ENCODE measurements at regions of chr20 and their contacts with region 1.

Region 1: DNA sequence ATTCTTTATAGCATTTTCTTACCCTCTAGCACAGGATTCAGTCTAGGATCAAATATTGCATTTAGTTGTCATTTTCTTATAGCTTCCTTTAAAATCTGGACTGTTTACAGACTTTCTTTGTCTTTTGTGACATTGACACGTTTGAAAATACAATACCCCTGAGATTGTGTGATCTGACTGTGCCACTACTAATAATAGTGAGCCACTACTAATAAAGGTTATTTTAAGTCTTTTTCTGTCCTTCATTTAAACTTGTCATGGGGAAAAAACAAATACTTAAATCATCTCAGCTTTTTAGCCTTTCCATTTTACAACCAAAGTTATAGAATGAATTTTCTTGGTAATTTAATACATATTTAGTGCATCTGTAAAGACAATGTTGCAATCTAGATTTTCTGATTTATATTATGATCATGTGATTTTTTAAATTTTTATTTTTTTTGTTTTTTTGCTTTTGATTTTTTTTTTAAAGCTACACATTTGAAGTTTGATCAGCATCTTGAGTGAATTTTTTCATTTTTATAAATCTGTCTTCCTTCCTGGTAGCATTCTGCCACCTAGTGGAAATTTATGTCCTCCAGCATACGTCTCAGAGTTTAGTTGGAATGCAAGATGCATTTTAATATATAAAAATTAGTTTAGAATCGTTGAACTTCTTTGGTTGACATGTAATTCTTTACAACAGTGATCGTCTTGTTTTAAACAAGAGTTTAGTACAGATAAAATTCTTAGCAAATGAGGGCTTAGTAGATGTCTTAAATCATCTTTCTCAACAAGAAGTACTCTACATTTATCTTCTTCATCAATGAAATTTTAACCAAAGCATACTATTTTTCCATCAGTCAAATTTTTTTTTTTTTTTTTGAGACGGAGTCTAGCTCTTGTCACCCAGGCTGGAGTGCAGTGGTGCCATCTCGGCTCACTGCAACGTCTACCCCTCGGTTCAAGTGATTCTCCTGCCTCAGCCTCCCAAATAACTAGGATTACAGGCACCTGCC is 119.4 kb downstream of the NCOA3 start:
- DNase-seq: peak; percentile 82
- ATAC-seq: peak; percentile 68
- H3K4me3 ChIP-seq: no peak overlapping the region
- H3K27ac ChIP-seq: no peak overlapping the region
- H3K4me1 ChIP-seq: no peaks in the 10 kb centered on the region
- H3K27me3 ChIP-seq: no peaks in the 10 kb centered on the region
- CTCF ChIP-seq: peak; percentile 92
- POLR2A ChIP-seq: 0 out of 2 replicates have a peak, but pooled peaks have one; percentile 34
- RAD21 ChIP-seq: peak; percentile 91

Region 2: DNA sequence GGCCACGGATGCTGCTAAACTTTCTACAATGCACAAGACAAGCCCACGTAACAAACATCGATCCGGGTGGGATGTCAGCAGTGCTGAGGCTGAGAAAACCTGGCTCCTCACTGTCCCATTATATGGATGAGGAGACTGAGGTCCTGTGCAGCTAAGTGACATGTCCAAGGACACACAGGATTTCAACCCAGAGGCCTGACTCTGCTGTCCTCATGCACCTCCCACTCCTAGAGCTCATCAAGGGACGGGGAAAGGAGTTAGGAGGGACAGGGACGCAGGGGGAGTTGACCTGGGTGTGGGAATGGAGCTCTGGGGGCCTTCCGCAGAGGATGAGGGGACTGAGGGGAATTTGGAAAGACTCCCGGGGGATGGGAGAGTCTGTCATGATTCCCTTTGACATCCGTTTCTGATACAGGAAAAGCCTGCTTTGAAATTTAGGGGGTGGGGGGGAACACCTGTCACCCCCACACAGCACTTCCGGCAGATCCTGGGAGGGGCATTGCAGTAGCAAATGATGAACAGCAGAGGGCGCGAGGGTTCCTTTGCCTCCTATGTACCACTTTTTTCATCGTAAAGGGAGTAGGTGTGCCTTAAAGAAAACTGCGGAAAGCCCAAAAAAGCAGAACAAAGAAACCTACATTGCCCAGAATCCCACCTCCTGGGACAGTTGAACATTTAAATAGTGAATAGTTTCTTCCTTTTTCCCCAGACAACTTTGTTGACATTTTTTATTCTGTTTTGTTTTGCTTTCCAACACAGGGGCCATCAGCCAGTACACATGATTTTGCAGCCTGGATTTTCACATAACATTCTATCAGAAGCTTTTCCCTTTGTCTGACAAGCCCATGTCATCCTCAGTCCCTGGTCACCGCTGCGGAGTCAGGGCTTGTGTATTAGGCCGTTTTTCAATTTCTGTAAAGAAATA is 863.1 kb before region 1 on chr20:
- CTCF ChIA-PET with region 1: no interaction called
- POLR2A ChIA-PET with region 1: no interaction called
- dilution Hi-C with region 1: no loop called
- in situ Hi-C with region 1: loop called (anchors 10 kb)
- intact Hi-C with region 1: no loop called
- DNase-seq: peak; percentile 60
- ATAC-seq: peak; percentile 89
- H3K4me3 ChIP-seq: no peak overlapping the region
- H3K27ac ChIP-seq: no peak overlapping the region
- H3K4me1 ChIP-seq: peaks cover 4% of the 10 kb centered on the region
- H3K27me3 ChIP-seq: no peaks in the 10 kb centered on the region
- CTCF ChIP-seq: peak; percentile 96
- POLR2A ChIP-seq: no peak
- RAD21 ChIP-seq: peak; percentile 92

Region 3: DNA sequence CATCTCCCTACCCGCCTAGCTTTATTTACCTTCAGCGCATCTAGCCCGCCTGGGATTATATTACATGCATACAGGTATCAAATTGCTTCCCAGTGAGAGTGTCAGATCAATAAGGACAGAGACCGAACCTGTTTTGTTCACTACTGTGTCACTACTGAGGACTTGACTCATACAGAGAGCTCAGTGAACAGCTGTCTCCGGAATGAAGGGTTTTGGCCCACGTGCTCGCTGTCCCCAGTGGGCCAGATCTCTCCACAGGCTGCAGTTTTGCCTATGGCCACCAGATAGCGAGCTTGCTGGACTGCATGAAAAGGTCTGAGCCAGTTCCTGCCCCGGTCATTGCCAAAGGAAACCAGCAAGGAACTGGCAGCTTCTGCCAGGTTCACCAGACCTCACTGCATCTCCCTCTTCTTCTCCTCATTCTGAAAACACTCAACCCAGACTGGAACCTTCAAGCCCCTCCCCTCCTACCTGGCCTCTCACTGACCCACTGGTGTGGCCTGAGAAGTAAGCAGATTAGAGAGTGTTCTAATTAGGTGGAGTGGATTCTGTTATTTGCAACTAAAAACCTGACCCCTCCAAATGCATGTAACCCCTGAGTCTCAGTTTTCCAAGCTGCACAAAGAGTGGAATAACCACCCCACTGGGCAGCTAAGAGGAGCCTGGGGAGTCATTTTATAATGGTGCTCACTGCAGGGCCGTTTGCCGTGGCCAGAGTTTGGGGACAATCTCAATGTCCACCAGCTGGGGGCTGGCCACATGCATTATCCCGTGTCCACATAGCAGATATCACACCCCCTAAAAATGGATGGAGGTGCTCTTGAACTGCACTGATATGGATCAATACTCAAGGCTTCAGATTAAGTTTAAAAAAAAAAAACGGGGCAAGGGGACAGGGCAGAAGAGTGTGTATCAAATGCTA is 415.3 kb before region 1 on chr20:
- CTCF ChIA-PET with region 1: no interaction called
- POLR2A ChIA-PET with region 1: no interaction called
- dilution Hi-C with region 1: no loop called
- in situ Hi-C with region 1: no loop called
- intact Hi-C with region 1: loop called (anchors 2 kb)
- DNase-seq: peak; percentile 79
- ATAC-seq: peak; percentile 83
- H3K4me3 ChIP-seq: no peak overlapping the region
- H3K27ac ChIP-seq: no peak overlapping the region
- H3K4me1 ChIP-seq: peaks cover 2% of the 10 kb centered on the region; the same call in 1 of the 2 replicates
- H3K27me3 ChIP-seq: no peaks in the 10 kb centered on the region
- CTCF ChIP-seq: peak; percentile 63
- POLR2A ChIP-seq: no peak
- RAD21 ChIP-seq: peak; percentile 65

Region 4: GRCh38 chr20:47392015-47392720 is 228.9 kb before region 1 on chr20:
- CTCF ChIA-PET with region 1: interaction called, 3 read pairs
- POLR2A ChIA-PET with region 1: interaction called, 3 read pairs
- dilution Hi-C with region 1: no loop called
- in situ Hi-C with region 1: no loop called
- intact Hi-C with region 1: loop called (anchors 1 kb)
- DNase-seq: peak; percentile 97
- ATAC-seq: peak; percentile 98
- H3K4me3 ChIP-seq: no peak overlapping the region
- H3K27ac ChIP-seq: peak overlapping the region; percentile 87
- H3K4me1 ChIP-seq: peaks cover 7% of the 10 kb centered on the region
- H3K27me3 ChIP-seq: no peaks in the 10 kb centered on the region
- CTCF ChIP-seq: no peak
- POLR2A ChIP-seq: no peak
- RAD21 ChIP-seq: no peak

Region 5: DNA sequence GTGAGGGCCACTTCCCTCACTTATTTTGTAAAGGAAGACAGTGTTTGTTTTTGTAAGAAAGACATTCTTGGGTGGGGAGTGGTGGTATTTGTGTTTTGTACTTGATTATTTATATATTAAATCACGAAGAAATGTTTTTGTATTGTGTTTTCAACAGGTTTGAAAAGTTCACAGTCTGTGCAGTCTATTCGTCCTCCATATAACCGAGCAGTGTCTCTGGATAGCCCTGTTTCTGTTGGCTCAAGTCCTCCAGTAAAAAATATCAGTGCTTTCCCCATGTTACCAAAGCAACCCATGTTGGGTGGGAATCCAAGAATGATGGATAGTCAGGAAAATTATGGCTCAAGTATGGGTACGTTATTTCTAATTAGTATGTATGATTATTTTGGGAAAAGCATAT is 17.7 kb after region 1 on chr20:
- CTCF ChIA-PET with region 1: no interaction called
- POLR2A ChIA-PET with region 1: no interaction called
- dilution Hi-C with region 1: no loop called
- in situ Hi-C with region 1: no loop called
- intact Hi-C with region 1: no loop called
- DNase-seq: no peak
- ATAC-seq: no peak
- H3K4me3 ChIP-seq: no peak overlapping the region
- H3K27ac ChIP-seq: no peak overlapping the region
- H3K4me1 ChIP-seq: no peaks in the 10 kb centered on the region
- H3K27me3 ChIP-seq: no peaks in the 10 kb centered on the region
- CTCF ChIP-seq: no peak
- POLR2A ChIP-seq: no peak
- RAD21 ChIP-seq: no peak